ENCODE measurements at regions of chr3 and their contacts with region 1.

Region 1: GRCh38 chr3:50245831-50246516 is 10.0 kb downstream of the GNAI2 start:
- DNase-seq: peak; percentile 98
- H3K4me3 Mint-ChIP-seq: peak overlapping the region; percentile 86
- H3K27ac Mint-ChIP-seq: peak overlapping the region; percentile 92
- H3K4me1 Mint-ChIP-seq: peaks cover 57% of the 10 kb centered on the region
- H3K27me3 Mint-ChIP-seq: no peaks in the 10 kb centered on the region

Region 2: DNA sequence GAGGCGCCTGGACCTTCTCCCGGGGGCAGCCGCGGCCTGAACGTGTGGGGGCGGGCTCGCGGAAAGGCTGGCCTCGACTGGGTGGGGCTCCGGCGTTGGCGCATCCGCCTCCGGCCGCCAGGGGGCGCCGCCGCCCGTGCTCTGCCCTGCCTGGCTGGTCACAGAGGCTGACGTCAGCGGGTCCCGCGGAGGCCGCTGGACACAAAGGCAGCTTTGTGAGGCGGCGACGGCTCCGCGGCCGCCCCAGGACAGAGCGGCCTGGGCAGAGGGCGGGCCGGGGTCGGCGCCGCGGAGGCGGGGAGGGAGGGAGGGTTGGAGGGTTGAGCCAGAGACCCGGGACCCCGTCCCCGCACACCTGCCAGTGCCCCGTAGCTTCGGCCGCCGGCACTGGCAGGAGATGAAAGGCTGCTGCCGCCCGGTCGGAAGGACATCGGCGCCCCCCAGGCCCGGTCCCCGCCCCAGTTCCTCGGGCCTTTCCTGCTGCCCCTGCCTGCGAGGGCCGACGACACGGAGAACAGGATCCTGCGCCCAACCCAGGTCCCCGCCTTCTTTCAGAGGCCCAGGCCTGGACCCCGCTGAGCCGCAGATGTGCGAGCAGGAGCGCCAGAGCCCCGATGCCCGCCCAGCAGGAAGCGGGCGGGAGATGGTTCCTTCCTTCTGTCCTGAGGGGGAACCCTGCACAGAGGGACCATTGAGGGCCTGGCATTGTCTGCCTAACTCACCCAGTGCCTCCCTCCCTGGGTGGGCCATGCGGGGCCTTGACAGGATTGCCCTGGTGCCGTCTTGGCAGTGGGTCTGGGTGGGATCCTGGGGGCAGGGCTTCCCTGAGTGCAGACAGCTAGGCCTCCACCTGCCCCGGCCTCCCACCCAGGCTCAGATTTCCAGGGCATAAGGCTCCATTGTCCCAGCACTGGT is 14.3 kb after region 1 on chr3:
- intact Hi-C with region 1: loop called (anchors 1 kb)
- DNase-seq: peak; percentile 97
- H3K4me3 Mint-ChIP-seq: peak overlapping the region; percentile 71
- H3K27ac Mint-ChIP-seq: peak overlapping the region; percentile 81
- H3K4me1 Mint-ChIP-seq: peaks cover 5% of the 10 kb centered on the region
- H3K27me3 Mint-ChIP-seq: no peaks in the 10 kb centered on the region

Measured in activated CD4-positive, alpha-beta T cell treated with anti-CD3 and anti-CD28 coated beads, Interleukin-2, amount 10 ng/mL, durations not matched to agents 24 days and 14 days (primary cell).